ENCODE measurements at regions of chr19 and their contacts with region 1.

Region 1: DNA sequence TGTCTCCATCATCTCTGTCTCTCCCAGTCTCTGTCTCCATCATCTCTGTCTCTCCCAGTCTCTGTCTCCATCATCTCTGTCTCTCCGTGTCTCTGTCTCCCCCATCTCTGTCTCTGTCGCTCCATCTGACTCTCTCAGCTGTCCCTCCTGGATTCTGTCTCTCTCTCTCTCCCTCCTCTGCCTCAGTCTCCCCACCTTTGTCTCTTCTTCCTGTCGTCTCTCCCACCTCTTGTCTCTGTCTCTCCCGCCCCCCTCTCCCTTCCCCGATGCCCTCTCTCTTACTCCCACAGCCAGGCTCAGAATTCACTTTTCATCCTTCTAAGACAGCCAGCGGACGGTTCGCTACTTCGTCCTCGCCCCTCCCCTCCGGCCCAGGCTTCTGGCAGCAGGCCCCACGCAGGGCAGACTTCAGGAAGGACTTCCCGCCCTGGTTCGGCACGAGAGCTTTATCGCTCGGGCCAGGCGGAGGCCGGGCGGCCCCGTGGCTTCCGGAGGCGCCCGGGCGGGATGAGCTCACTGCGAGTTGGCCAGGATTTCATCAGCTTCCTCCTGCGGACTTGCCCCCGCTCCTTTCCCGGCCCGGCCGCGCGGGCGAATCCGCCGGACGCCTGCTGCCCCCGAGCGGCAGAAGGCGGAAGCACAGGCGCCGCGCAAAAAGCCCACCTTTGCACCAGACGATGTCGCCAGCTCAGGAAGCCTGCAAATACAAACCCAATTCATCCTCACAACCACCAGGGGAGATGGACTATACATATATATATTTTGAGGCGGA is 12.4 kb upstream of the CCDC9 start:
- DNase-seq: peak; percentile 92
- H3K4me3 ChIP-seq: peak overlapping the region; percentile 23 to 64 (median 28)
- H3K27ac ChIP-seq: peak overlapping the region; percentile 55
- H3K4me1 ChIP-seq: peaks cover 26% of the 10 kb centered on the region
- H3K27me3 ChIP-seq: no peaks in the 10 kb centered on the region
- CTCF ChIP-seq: peak; percentile 92 to 98

Region 2: GRCh38 chr19:47075179-47075810 is 168.7 kb before region 1 on chr19:
- CTCF ChIA-PET with region 1: interaction called, 19 read pairs
- dilution Hi-C with region 1: no loop called
- in situ Hi-C with region 1: no loop called
- intact Hi-C with region 1: loop called (anchors 5 kb)
- DNase-seq: no peak
- H3K4me3 ChIP-seq: no peak overlapping the region
- H3K27ac ChIP-seq: no peak overlapping the region
- H3K4me1 ChIP-seq: peaks cover 2% of the 10 kb centered on the region
- H3K27me3 ChIP-seq: no peaks in the 10 kb centered on the region
- CTCF ChIP-seq: no peak

Region 3: GRCh38 chr19:47141695-47142094 is 102.3 kb before region 1 on chr19:
- CTCF ChIA-PET with region 1: no interaction called
- dilution Hi-C with region 1: no loop called
- in situ Hi-C with region 1: no loop called
- intact Hi-C with region 1: no loop called
- DNase-seq: no peak
- H3K4me3 ChIP-seq: no peak overlapping the region
- H3K27ac ChIP-seq: no peak overlapping the region
- H3K4me1 ChIP-seq: no peaks in the 10 kb centered on the region
- H3K27me3 ChIP-seq: no peaks in the 10 kb centered on the region
- CTCF ChIP-seq: no peak

Region 4: GRCh38 chr19:47152224-47153017 is 91.5 kb before region 1 on chr19:
- CTCF ChIA-PET with region 1: interaction called, 8 read pairs
- dilution Hi-C with region 1: no loop called
- in situ Hi-C with region 1: loop called (anchors 5 to 10 kb)
- intact Hi-C with region 1: loop called (anchors 1 kb)
- DNase-seq: peak; percentile 89
- H3K4me3 ChIP-seq: no peak overlapping the region
- H3K27ac ChIP-seq: peak overlapping the region; percentile 11
- H3K4me1 ChIP-seq: peaks cover 28% of the 10 kb centered on the region
- H3K27me3 ChIP-seq: no peaks in the 10 kb centered on the region
- CTCF ChIP-seq: no peak

Region 5: DNA sequence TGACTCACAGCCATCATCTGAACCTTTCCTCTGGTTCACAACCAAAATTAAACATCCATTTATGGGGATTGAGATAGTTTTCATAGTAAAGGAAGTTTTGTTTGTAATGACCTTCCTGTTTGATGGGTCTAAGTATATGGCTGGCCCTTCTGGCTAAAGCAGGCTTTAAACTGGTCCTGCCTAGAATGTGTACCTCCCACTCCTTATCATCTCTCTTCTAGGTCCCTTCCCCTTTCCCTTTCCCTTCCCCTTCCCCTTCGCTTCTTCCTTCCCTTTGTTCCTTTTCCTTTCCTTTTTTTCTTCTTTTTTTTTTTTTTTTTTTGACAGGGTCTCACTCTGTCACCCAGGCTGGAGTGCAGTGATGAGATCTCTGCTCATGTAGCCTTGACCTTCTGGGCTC is 48.5 kb before region 1 on chr19:
- CTCF ChIA-PET with region 1: interaction called, 16 read pairs
- dilution Hi-C with region 1: no loop called
- in situ Hi-C with region 1: no loop called
- intact Hi-C with region 1: no loop called
- DNase-seq: no peak
- H3K4me3 ChIP-seq: no peak overlapping the region
- H3K27ac ChIP-seq: no peak overlapping the region
- H3K4me1 ChIP-seq: peaks cover 2% of the 10 kb centered on the region
- H3K27me3 ChIP-seq: no peaks in the 10 kb centered on the region
- CTCF ChIP-seq: no peak

Region 6: DNA sequence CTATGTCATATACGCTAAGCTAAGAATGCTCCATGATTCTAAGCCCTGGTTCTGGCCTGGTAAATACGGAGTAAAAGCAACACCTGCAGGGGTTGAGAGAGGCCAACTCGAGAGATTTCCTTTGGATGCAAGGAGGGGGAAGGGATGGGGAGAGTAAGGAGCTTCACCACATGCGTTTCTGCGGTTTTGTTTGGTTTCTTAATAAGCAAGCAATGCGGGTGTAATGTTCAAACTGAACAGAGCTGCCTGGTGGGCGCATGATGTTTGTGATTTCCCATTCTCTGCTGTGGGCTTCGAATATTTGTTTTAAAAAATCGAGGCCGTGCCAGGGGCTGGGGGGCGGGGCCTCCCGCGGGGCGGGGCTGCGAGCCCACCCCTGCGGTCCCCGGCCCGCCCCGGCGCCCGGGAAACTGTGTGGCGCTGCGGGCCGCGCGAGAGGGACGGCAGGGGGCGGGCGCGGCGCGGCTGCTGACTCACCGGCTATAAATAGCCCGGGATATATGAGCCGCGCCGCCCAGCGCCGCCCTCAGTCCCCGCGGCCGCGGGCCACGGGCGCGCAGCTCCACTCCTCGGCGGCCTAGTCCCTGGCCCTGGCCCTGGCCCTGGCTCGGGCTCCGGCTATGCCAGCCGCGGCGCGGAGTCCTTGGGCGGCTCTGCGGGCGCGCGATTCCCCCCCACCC is 18.1 kb before region 1 on chr19:
- CTCF ChIA-PET with region 1: no interaction called
- dilution Hi-C with region 1: no loop called
- in situ Hi-C with region 1: no loop called
- intact Hi-C with region 1: loop called (anchors 1 kb)
- DNase-seq: peak; percentile 77
- H3K4me3 ChIP-seq: peak overlapping the region in 1 of 3 experiments; percentile 40
- H3K27ac ChIP-seq: peak overlapping the region; percentile 60
- H3K4me1 ChIP-seq: peaks cover 43% of the 10 kb centered on the region
- H3K27me3 ChIP-seq: no peaks in the 10 kb centered on the region
- CTCF ChIP-seq: peak in 1 of 2 donors; percentile 20

Region 7: DNA sequence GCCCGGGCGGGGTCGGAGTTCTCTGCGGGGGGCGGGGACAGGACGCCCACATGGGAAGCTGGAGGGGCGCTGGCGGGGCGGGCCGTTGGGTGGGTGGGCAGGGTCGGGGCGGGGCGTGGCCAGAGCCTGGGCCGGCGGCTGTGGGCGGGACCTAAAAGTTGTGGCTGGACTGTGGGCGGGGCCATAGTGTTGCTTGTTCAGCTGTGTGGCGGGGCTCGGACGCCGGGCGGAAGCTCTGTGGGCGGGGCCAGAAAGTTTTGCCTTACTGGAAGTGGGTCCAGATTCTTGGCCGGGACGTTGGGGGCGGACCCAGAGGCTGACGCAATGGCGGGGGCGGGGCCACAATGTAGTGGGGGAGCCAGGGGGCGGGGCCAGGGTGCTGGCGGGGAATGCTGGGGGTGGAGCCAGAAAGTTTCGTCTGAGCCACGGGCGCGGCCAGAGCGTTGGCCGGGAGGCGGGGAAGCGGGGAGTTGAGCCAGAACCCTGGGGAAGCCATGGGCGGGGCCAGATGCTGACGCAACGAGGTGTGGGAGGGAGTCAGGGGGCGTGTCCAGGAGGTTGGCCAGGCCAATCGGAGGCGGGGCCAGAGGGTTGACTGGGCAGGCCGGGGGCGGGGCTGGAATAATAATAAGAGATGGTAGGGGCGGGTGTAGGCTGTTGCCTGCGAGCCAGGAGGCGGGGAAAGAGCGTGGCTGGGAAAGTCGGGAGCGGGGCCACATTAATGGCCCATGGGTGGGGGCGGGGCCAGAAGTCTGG is 12.9 kb after region 1 on chr19:
- CTCF ChIA-PET with region 1: interaction called, 11 read pairs
- dilution Hi-C with region 1: no loop called
- in situ Hi-C with region 1: no loop called
- intact Hi-C with region 1: loop called (anchors 1 kb)
- DNase-seq: peak; percentile 97
- H3K4me3 ChIP-seq: peak overlapping the region in 2 of 3 experiments; percentile 60 to 81
- H3K27ac ChIP-seq: peak overlapping the region; percentile 92
- H3K4me1 ChIP-seq: peaks cover 21% of the 10 kb centered on the region
- H3K27me3 ChIP-seq: no peaks in the 10 kb centered on the region
- CTCF ChIP-seq: no peak

Region 8: DNA sequence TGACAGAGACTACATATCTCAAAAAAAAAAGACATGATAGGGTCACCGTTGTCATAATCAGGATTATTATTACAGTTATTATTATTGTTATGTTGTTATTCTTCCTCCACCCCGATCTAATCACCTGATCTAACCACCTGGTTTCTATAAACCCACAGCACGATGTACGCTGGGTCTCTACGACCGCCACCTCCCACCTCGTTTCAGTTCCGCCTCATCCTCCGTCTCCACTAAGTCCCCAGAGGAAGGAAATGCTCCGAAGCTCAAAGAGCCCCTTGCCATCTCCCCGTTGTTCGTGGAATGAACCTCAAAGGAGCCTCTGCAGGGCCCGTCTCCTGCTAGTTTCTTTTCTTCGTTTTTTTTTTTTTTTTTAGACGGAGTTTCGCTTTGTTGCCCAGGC is 191.2 kb after region 1 on chr19:
- CTCF ChIA-PET with region 1: no interaction called
- dilution Hi-C with region 1: no loop called
- in situ Hi-C with region 1: no loop called
- intact Hi-C with region 1: no loop called
- DNase-seq: no peak
- H3K4me3 ChIP-seq: no peak overlapping the region
- H3K27ac ChIP-seq: no peak overlapping the region
- H3K4me1 ChIP-seq: peaks cover 1% of the 10 kb centered on the region
- H3K27me3 ChIP-seq: no peaks in the 10 kb centered on the region
- CTCF ChIP-seq: no peak

Measured in mammary epithelial cell (primary cell).